Mucosa of descending colon (tissue), 3 donors: ENCODE measurements at regions of chr16 and their contacts with region 1.

Region 1: GRCh38 chr16:46689365-46690280 is at the start of gene ORC6:
- DNase-seq: peak; percentile 97 to 100 (median 98)
- ATAC-seq: peak; percentile 86
- H3K4me3 ChIP-seq: peak within 1 kb of the TSS; percentile 70
- H3K4me1 ChIP-seq: peaks cover 35% of the 10 kb centered on the region
- CTCF ChIP-seq: no peak
- total RNA-seq, gene ORC6: 3.5 to 10.3 (median 3.8) TPM

Region 2: DNA sequence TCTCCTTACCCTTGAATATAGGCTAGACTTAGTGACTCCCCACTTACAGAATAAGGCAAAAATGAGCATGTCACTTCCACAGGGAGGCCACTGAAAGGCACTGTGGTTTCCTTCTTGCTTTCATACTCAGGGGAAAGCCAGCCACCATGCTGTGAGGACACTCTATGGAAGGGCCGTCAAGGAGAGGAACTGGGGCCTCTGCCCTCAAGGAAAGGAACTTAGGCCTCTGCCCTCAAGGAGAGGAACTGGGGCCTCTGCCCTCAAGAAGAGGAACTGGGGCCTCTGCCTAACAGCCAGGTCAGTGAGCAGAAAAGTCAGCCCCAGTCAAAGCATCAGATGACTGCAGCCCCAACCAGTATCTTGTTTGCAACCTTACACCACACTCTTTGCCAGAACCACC is 30.7 kb before region 1 on chr16:
- intact Hi-C with region 1: no loop called
- DNase-seq: peak in 1 of 3 donors; percentile 14
- ATAC-seq: peak; percentile 76
- H3K4me3 ChIP-seq: no peak overlapping the region
- H3K4me1 ChIP-seq: no peaks in the 10 kb centered on the region
- CTCF ChIP-seq: no peak

Region 3: DNA sequence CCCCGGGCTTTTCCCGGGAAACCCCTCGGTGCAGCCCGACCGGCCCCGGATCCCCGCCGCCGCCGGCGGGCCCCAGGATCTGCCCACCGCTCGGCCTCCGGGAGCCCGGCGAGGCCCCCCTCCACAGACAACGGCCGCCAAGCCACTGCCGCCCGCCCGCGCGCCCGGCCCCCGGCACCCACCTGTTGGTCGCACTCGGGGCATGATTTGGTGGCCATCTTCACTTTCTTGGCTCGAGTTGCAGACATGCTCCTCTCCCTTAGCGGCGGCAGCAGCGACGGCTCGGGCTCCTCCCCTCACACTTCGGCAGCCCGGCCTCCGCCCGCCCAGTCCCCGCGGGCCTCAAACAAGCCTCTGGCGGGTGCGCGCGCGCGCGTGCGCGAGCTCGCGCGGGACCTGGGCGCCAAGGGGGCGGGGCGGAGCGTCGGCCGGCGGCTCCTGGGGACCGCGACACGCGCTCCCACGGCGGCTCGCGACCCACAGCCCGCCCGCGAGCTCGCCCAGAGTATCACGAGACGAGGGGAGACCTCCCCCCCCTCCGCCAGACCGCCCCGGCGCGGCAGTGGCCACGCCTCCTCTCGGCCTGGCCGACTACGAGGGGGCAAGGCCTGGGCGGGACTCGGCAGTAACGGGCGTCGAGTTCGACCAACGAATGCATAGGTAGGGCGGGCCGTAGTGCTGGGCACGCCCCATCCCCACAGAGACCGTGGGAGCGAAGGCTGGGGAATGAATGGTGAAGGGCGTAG is 141.5 kb after region 1 on chr16 and contains the start of gene C16orf87:
- intact Hi-C with region 1: loop called in 1 of 2 experiments (anchors 5 kb)
- DNase-seq: peak; percentile 92 to 96 (median 95)
- ATAC-seq: peak; percentile 96
- H3K4me3 ChIP-seq: peak within 1 kb of the TSS; percentile 83
- H3K4me1 ChIP-seq: peaks cover 18% of the 10 kb centered on the region
- CTCF ChIP-seq: no peak
- total RNA-seq, gene C16orf87: 5.3 to 8.3 (median 5.4) TPM

Region 4: GRCh38 chr16:46883690-46884512 is 194.3 kb after region 1 on chr16 and contains the start of gene GPT2:
- intact Hi-C with region 1: no loop called
- DNase-seq: peak; percentile 96 to 97 (median 97)
- ATAC-seq: peak; percentile 98
- H3K4me3 ChIP-seq: peak within 1 kb of the TSS; percentile 45
- H3K4me1 ChIP-seq: no peaks in the 10 kb centered on the region
- CTCF ChIP-seq: no peak
- total RNA-seq, gene GPT2: 9.2 to 20.8 (median 10.5) TPM

Region 5: GRCh38 chr16:46899443-46900143 is 210.0 kb after region 1 on chr16:
- intact Hi-C with region 1: no loop called
- DNase-seq: no peak
- ATAC-seq: no peak
- H3K4me3 ChIP-seq: no peak overlapping the region
- H3K4me1 ChIP-seq: peaks cover 6% of the 10 kb centered on the region
- CTCF ChIP-seq: no peak

Region 6: DNA sequence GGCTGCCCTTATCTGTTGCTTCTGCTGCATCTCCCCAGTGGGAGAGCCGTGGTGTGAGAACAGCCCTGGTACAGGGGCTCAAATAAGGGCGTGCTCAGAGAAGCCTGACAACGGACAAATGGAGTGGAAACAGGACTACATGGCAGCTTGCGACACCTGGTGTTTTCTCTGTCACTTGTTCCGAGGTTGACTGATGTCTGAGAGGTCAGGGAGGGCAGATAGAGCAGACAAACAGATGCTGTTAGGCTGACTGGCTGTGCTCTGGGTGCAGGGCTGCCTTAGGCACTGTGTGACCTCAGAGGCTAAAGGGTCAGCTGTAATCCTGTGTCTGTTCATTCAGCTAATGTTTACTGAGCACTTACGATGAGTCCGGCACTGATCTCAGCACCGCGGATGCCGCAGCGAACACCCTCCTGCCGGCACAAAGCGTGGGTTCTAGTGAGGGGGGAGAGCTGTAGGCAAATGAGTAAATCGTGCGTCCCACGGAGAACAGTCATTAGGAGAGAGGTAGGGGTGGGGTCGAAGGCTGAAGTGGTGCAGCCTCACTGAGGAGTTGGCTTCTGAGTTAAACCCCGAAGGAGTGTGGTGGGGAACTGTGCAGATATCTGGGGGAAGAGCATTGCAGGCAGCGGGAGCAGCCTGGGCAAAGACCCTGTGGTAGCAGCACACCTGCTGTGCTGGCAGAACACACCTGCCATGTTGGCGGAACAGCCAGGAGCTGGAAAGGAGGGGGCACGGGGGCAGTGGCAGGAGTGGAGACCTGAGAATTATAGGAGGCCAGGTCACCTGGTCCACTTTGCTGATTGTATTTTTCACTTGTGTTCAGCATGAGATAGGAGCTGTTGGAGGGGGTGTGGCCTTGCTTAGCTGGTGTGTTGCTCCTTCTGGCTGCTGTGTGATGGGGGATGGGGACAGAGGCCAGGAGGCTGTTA is 229.5 kb after region 1 on chr16:
- intact Hi-C with region 1: no loop called
- DNase-seq: peak in 1 of 3 donors; percentile 41
- ATAC-seq: peak; percentile 48
- H3K4me3 ChIP-seq: no peak overlapping the region
- H3K4me1 ChIP-seq: peaks cover 11% of the 10 kb centered on the region
- CTCF ChIP-seq: no peak